ENCODE measurements at regions of chr1 and their contacts with region 1.

Region 1: GRCh38 chr1:1511533-1512285 is at the start of gene ATAD3A:
- DNase-seq: peak; percentile 89 to 99
- H3K4me3 ChIP-seq: peak within 1 kb of the TSS; percentile 81
- H3K27ac ChIP-seq: peak within 1 kb of the TSS; percentile 85 to 93
- H3K4me1 ChIP-seq: peaks cover 0 to 7% of the 10 kb centered on the region in 2 donors
- H3K27me3 ChIP-seq: no peaks in the 10 kb centered on the region
- CTCF ChIP-seq: no peak
- total RNA-seq, gene ATAD3A: 46.3 TPM

Region 2: GRCh38 chr1:1471389-1472052 is 40.2 kb before region 1 on chr1 and contains the start of gene ATAD3B:
- intact Hi-C with region 1: loop called (anchors 1 kb)
- DNase-seq: peak; percentile 67 to 96
- H3K4me3 ChIP-seq: peak within 1 kb of the TSS; percentile 73 to 81
- H3K27ac ChIP-seq: peak within 1 kb of the TSS; percentile 72 to 77
- H3K4me1 ChIP-seq: peaks cover 0 to 22% of the 10 kb centered on the region in 2 donors
- H3K27me3 ChIP-seq: no peaks in the 10 kb centered on the region
- CTCF ChIP-seq: no peak
- total RNA-seq, gene ATAD3B: 14.2 TPM

Region 3: GRCh38 chr1:1615256-1616044 is 103.7 kb after region 1 on chr1 and contains the start of gene MIB2:
- intact Hi-C with region 1: loop called (anchors 1 kb)
- DNase-seq: peak; percentile 74 to 97
- H3K4me3 ChIP-seq: peak within 1 kb of the TSS; percentile 97 to 100
- H3K27ac ChIP-seq: peak within 1 kb of the TSS; percentile 100
- H3K4me1 ChIP-seq: peaks cover 15 to 25% of the 10 kb centered on the region in 2 donors
- H3K27me3 ChIP-seq: no peaks in the 10 kb centered on the region
- CTCF ChIP-seq: peak in 1 of 3 experiments; percentile 18
- total RNA-seq, gene MIB2: 96.9 TPM

Measured in ascending aorta (tissue), 2 donors.